Activated CD8-positive, alpha-beta T cell treated with anti-CD3 and anti-CD28 coated beads, Interleukin-2, amount 10 ng/mL, durations not matched to agents 7 days and 5 days (primary cell): ENCODE measurements at regions of chrX and their contacts with region 1.

Region 1: GRCh38 chrX:53433651-53434639 is at the start of gene HSD17B10:
- DNase-seq: peak; percentile 91
- ATAC-seq: peak; percentile 97
- H3K4me3 Mint-ChIP-seq: peak within 1 kb of the TSS; percentile 96
- H3K27ac Mint-ChIP-seq: peak within 1 kb of the TSS; percentile 92
- H3K4me1 Mint-ChIP-seq: peaks cover 38% of the 10 kb centered on the region
- H3K27me3 Mint-ChIP-seq: no peaks in the 10 kb centered on the region
- total RNA-seq, gene HSD17B10: 106 to 113 TPM

Region 2: GRCh38 chrX:53290441-53291041 is 143.4 kb before region 1 on chrX:
- CTCF ChIA-PET with region 1: no interaction called
- POLR2A ChIA-PET with region 1: no interaction called
- DNase-seq: no peak
- ATAC-seq: no peak
- H3K4me3 Mint-ChIP-seq: no peak overlapping the region
- H3K27ac Mint-ChIP-seq: no peak overlapping the region
- H3K4me1 Mint-ChIP-seq: peaks cover 22% of the 10 kb centered on the region
- H3K27me3 Mint-ChIP-seq: no peaks in the 10 kb centered on the region

Region 3: DNA sequence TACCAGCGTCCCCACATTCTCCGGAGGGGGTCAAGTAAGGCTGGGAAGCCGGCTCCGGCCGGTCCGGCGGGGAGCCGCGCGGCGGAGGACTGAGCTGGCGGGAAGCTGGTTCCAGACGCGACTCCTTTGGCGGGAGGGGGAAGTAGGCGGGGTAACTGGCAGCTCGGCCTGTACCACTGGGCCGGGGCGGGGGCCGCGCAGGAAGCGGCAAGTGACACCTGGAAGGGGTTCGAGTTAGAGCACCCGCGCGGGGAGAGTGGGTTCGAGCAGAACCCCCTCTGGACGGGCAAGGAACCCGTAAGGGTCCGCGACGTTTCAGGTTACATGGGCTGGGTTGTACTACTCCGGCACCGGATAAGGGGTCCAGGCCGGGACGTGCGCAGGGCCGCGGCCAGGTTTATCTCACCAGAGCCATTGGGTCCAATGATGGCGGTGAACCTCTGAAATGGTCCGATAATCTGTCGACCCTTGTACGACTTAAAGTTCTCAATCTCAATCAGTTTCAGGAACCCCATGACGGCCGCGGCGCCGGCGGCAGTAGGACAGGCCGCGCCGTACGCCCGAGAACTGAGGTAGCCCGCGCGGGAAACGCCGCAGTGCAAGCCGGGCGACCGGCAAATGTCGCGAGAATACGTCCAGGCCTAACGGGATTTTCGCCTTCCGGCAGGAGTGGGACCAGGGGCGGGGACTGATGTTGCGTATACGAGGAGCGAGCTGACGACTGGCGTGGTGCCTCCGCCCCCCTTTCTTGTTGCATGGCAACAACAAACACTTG is 11.7 kb before region 1 on chrX and contains the start of gene SMC1A:
- CTCF ChIA-PET with region 1: interaction called, 11 read pairs
- POLR2A ChIA-PET with region 1: interaction called, 23 read pairs
- DNase-seq: peak; percentile 96
- ATAC-seq: peak; percentile 90
- H3K4me3 Mint-ChIP-seq: peak within 1 kb of the TSS; percentile 95
- H3K27ac Mint-ChIP-seq: peak within 1 kb of the TSS; percentile 99
- H3K4me1 Mint-ChIP-seq: peaks cover 26% of the 10 kb centered on the region
- H3K27me3 Mint-ChIP-seq: no peaks in the 10 kb centered on the region
- total RNA-seq, gene SMC1A: 151 to 155 TPM

Region 4: GRCh38 chrX:53445977-53446376 is 12.0 kb after region 1 on chrX:
- CTCF ChIA-PET with region 1: interaction called, 18 read pairs
- POLR2A ChIA-PET with region 1: no interaction called
- DNase-seq: peak; percentile 64
- ATAC-seq: no peak
- H3K4me3 Mint-ChIP-seq: no peak overlapping the region
- H3K27ac Mint-ChIP-seq: no peak overlapping the region
- H3K4me1 Mint-ChIP-seq: peaks cover 11% of the 10 kb centered on the region
- H3K27me3 Mint-ChIP-seq: no peaks in the 10 kb centered on the region

Region 5: DNA sequence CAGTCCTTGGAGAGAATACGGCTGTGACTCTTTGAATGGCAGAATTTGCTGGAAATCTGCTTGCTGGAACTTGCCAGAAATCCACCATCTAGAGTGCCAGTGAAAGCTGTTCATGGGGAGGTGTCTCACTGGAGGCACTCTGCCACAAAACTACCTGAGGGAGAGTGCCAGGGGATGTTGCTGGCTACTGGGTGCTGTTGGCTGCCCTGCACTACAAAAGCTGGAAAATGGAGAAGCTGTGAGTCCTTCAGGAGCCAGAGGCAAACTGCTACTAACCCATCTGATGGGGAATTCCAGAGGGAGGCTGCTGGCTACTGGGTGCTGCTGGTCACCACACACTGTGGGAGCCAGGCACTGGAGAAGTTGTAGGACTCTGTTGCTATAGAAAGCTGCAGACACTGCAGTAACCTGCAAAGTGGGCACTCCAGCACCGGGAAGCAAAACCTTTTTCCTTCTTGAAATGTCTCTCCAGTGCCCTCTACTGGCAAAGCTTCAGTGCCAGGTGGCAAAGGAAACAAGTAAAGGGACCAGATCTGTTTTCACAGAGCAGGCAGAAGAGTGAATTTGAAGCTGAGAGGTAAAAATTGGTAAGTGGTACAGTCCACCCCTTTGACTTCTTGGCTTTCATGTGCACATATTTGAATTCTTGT is 48.0 kb after region 1 on chrX:
- CTCF ChIA-PET with region 1: interaction called, 11 read pairs
- POLR2A ChIA-PET with region 1: no interaction called
- DNase-seq: peak; percentile 67
- ATAC-seq: peak; percentile 53
- H3K4me3 Mint-ChIP-seq: no peak overlapping the region
- H3K27ac Mint-ChIP-seq: no peak overlapping the region
- H3K4me1 Mint-ChIP-seq: peaks cover 2% of the 10 kb centered on the region
- H3K27me3 Mint-ChIP-seq: no peaks in the 10 kb centered on the region